ENCODE measurements at regions of chr3 and their contacts with region 1.

Region 1: DNA sequence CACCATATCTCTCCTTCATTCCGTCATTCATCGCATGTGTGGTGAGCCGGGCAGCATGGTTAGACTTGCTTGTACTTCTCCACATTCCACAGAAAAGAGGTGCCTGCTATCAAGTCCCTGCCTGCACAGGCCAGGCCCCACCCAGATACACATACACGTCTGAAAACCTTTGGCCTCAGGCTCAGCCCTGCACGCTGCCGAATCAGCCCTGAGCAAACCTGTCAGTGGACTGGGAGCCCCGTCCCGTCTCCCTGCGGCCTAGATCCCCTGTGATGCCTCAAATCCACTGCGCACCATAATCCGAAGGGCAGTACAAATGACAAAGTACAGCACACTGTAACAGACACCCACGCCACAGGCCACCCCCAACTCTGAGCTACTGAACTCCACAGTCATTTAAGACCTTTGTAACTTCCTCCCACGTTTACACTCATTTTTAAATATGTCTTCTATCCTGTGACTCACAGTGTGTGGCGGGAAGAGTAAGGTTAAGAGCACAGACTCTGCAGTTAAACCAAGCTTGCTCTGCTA is 67.1 kb downstream of the MB21D2 start:
- DNase-seq: peak; percentile 46
- H3K4me3 Mint-ChIP-seq: peak overlapping the region; percentile 53
- H3K27ac Mint-ChIP-seq: peak overlapping the region; percentile 83
- H3K4me1 Mint-ChIP-seq: peaks cover 73% of the 10 kb centered on the region
- H3K27me3 Mint-ChIP-seq: no peaks in the 10 kb centered on the region

Region 2: GRCh38 chr3:192675958-192676649 is 174.4 kb before region 1 on chr3:
- intact Hi-C with region 1: loop called (anchors 1 kb)
- DNase-seq: no peak
- H3K4me3 Mint-ChIP-seq: no peak overlapping the region
- H3K27ac Mint-ChIP-seq: peak overlapping the region; percentile 97
- H3K4me1 Mint-ChIP-seq: peaks cover 12% of the 10 kb centered on the region
- H3K27me3 Mint-ChIP-seq: peaks cover 12% of the 10 kb centered on the region

Region 3: DNA sequence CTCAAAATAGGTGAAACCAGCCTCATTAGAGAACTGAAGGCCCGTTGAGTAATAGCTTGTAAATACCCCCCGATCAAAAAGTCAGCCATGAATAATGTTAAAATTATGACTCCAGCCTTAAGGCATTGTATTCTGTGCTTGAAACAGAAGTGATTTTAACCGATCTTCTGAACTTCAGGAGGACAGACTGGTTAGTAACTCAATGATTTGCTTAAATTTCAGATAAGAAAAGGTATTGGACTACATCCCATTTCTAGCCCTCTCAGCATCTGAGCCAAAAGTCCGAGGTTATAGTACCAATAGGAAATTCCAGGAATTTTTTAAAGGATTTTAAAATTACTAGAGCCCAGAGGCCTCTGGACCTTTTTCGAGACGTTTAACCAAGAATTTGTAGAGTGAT is 55.5 kb before region 1 on chr3:
- intact Hi-C with region 1: no loop called
- DNase-seq: no peak
- H3K4me3 Mint-ChIP-seq: no peak overlapping the region
- H3K27ac Mint-ChIP-seq: no peak overlapping the region
- H3K4me1 Mint-ChIP-seq: no peaks in the 10 kb centered on the region
- H3K27me3 Mint-ChIP-seq: no peaks in the 10 kb centered on the region

Region 4: DNA sequence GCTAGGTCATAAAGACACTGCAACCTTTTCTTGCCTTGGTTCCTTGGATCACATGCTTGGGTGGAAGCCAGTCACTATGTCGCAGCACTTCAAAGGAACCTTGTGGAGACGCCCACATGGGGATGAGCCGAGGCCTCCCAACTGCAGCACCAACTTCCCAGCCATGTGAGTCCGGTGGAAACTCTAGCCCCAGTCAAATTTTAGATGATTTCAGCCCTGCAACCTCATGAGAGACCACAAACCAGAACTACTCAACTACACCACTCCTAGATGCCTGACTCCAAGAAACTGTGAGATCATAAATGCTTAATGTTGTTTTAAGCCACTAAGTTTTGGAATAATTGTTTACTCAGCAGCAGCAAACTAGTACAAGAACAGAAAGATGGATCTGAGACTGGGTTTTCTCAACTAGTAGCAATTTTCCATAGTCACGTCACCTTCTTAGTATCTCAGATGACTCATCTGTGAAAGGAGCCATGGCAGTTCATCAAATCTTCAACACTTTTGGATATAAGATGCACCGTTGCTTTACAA is 19.3 kb before region 1 on chr3:
- intact Hi-C with region 1: loop called (anchors 1 kb)
- DNase-seq: peak; percentile 15
- H3K4me3 Mint-ChIP-seq: peak overlapping the region; percentile 25
- H3K27ac Mint-ChIP-seq: peak overlapping the region; percentile 88
- H3K4me1 Mint-ChIP-seq: peaks cover 67% of the 10 kb centered on the region
- H3K27me3 Mint-ChIP-seq: no peaks in the 10 kb centered on the region

Region 5: GRCh38 chr3:192887047-192887446 is 36.5 kb after region 1 on chr3:
- intact Hi-C with region 1: loop called (anchors 1 kb)
- DNase-seq: no peak
- H3K4me3 Mint-ChIP-seq: peak overlapping the region; percentile 54
- H3K27ac Mint-ChIP-seq: peak overlapping the region; percentile 69
- H3K4me1 Mint-ChIP-seq: peaks cover 82% of the 10 kb centered on the region
- H3K27me3 Mint-ChIP-seq: peaks cover 2% of the 10 kb centered on the region

Region 6: DNA sequence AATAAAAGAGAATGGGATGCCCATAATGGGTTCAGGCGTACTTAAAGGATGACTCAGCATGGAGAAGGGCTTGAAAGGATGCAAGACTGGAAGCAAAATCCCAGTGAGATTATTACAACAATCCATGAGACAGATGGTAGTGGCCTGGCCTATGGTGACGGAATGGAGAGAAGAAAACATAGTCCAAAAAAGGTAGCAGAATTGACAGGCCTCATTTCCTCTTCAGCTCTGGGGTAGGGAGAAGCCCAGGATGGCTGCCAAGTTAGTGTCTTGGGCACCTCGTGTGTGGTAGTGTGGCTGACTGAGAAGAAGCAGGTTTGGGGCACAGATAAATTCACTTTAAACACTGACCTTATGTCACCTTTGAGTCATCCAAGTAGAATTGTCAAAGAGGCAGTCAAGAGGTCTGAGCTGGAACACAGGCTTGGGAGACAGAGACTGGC is 49.0 kb after region 1 on chr3:
- intact Hi-C with region 1: loop called (anchors 1 kb)
- DNase-seq: no peak
- H3K4me3 Mint-ChIP-seq: peak overlapping the region; percentile 41
- H3K27ac Mint-ChIP-seq: peak overlapping the region; percentile 79
- H3K4me1 Mint-ChIP-seq: peaks cover 74% of the 10 kb centered on the region
- H3K27me3 Mint-ChIP-seq: no peaks in the 10 kb centered on the region

Region 7: GRCh38 chr3:193040836-193041672 is 190.5 kb after region 1 on chr3:
- intact Hi-C with region 1: loop called (anchors 1 kb)
- DNase-seq: no peak
- H3K4me3 Mint-ChIP-seq: no peak overlapping the region
- H3K27ac Mint-ChIP-seq: no peak overlapping the region
- H3K4me1 Mint-ChIP-seq: peaks cover 10% of the 10 kb centered on the region
- H3K27me3 Mint-ChIP-seq: peaks cover 8% of the 10 kb centered on the region